ENCODE measurements at regions of chr22 and their contacts with region 1.

Region 1: GRCh38 chr22:36644333-36644757 is 59.2 kb downstream of the CACNG2 start:
- DNase-seq: peak; percentile 71 to 90
- H3K4me3 ChIP-seq: no peak overlapping the region
- H3K27ac ChIP-seq: no peak overlapping the region
- H3K4me1 ChIP-seq: peaks cover 21% of the 10 kb centered on the region
- H3K27me3 ChIP-seq: peaks cover 85% of the 10 kb centered on the region
- CTCF ChIP-seq: no peak

Region 2: GRCh38 chr22:36606114-36606513 is 38.2 kb before region 1 on chr22:
- CTCF ChIA-PET with region 1: no interaction called
- POLR2A ChIA-PET with region 1: interaction called, 15 read pairs
- intact Hi-C with region 1: loop called (anchors 5 kb)
- DNase-seq: no peak
- H3K4me3 ChIP-seq: no peak overlapping the region
- H3K27ac ChIP-seq: no peak overlapping the region
- H3K4me1 ChIP-seq: peaks cover 10% of the 10 kb centered on the region
- H3K27me3 ChIP-seq: peaks cover 98% of the 10 kb centered on the region
- CTCF ChIP-seq: no peak

Region 3: DNA sequence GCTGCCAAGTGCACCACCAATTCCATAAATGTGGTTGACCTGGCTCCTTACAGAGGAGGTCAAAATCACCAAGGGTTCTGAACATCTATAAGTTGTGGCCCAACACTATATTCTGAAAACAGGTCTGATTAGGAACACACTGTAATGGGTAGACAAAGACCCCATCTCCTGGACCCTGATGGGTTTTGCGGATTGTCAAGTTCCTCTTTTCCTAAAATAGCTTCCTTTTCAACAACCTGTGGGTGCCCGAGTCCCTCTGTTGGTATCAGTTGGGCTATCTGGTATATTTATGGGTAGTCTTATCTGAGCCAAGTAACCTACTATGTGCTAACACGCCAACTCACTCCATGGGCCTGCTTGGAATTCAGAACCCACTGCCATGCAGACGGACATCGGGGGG is 69.1 kb after region 1 on chr22:
- CTCF ChIA-PET with region 1: no interaction called
- POLR2A ChIA-PET with region 1: no interaction called
- intact Hi-C with region 1: loop called (anchors 10 kb)
- DNase-seq: no peak
- H3K4me3 ChIP-seq: no peak overlapping the region
- H3K27ac ChIP-seq: no peak overlapping the region
- H3K4me1 ChIP-seq: no peaks in the 10 kb centered on the region
- H3K27me3 ChIP-seq: peaks cover 93% of the 10 kb centered on the region
- CTCF ChIP-seq: no peak